Heart left ventricle (tissue), 16 donors: ENCODE measurements at regions of chr12 and their contacts with region 1.

Region 1: GRCh38 chr12:14514154-14514842 is 53.4 kb downstream of the PLBD1 start:
- DNase-seq: peak in 3 of 5 donors; percentile 23 to 42 (median 29)
- ATAC-seq: peak in 3 of 4 donors; percentile 61 to 72 (median 69)
- H3K4me3 ChIP-seq: no peak overlapping the region
- H3K27ac ChIP-seq: no peak overlapping the region
- H3K4me1 ChIP-seq: no peaks in the 10 kb centered on the region
- H3K27me3 ChIP-seq: no peaks in the 10 kb centered on the region
- CTCF ChIP-seq: peak; percentile 20 to 61 (median 52)
- POLR2A ChIP-seq: no peak

Region 2: GRCh38 chr12:14471497-14471896 is 42.8 kb before region 1 on chr12:
- intact Hi-C with region 1: no loop called
- DNase-seq: no peak
- ATAC-seq: no peak
- H3K4me3 ChIP-seq: no peak overlapping the region
- H3K27ac ChIP-seq: no peak overlapping the region
- H3K4me1 ChIP-seq: peaks cover 0 to 4% (median 0%) of the 10 kb centered on the region in 12 donors
- H3K27me3 ChIP-seq: no peaks in the 10 kb centered on the region
- CTCF ChIP-seq: no peak
- POLR2A ChIP-seq: no peak

Region 3: DNA sequence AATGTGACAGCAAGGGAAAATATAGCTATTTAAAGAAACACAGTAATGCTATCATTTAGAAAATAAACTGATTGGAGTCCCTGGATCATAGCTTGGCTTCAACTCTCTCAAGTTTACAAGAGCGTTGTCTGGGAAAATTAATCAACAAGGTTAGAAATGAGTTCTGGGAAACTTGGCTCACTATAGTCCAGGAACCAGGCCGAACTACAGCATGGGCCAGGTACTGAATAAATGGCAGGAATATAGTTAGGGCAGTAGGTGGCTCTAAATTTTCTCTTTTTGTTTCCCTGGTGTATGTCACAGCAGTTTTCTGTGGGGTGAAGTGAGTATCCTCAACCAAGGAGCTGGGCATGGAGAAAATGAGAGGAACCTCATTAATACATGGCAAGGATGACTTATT is 19.0 kb before region 1 on chr12:
- intact Hi-C with region 1: no loop called
- DNase-seq: no peak
- ATAC-seq: peak; percentile 47 to 70 (median 58)
- H3K4me3 ChIP-seq: no peak overlapping the region
- H3K27ac ChIP-seq: no peak overlapping the region
- H3K4me1 ChIP-seq: peaks cover 0 to 11% (median 0%) of the 10 kb centered on the region in 12 donors
- H3K27me3 ChIP-seq: no peaks in the 10 kb centered on the region
- CTCF ChIP-seq: no peak
- POLR2A ChIP-seq: no peak

Region 4: GRCh38 chr12:14618983-14619382 is 104.7 kb after region 1 on chr12:
- intact Hi-C with region 1: loop called (anchors 2 to 10 kb)
- DNase-seq: peak in 1 of 5 donors; percentile 11
- ATAC-seq: peak in 2 of 4 donors; percentile 44 to 75
- H3K4me3 ChIP-seq: no peak overlapping the region
- H3K27ac ChIP-seq: no peak overlapping the region
- H3K4me1 ChIP-seq: peaks cover 0 to 16% (median 5%) of the 10 kb centered on the region in 12 donors
- H3K27me3 ChIP-seq: no peaks in the 10 kb centered on the region
- CTCF ChIP-seq: peak in 10 of 12 donors; percentile 23 to 60 (median 48)
- POLR2A ChIP-seq: no peak

Region 5: GRCh38 chr12:14664510-14664909 is 150.2 kb after region 1 on chr12:
- intact Hi-C with region 1: loop called in 3 of 10 experiments (anchors 5 to 10 kb)
- DNase-seq: no peak
- ATAC-seq: peak in 2 of 4 donors; percentile 58 to 64
- H3K4me3 ChIP-seq: no peak overlapping the region
- H3K27ac ChIP-seq: no peak overlapping the region
- H3K4me1 ChIP-seq: peaks cover 0 to 3% (median 0%) of the 10 kb centered on the region in 12 donors
- H3K27me3 ChIP-seq: no peaks in the 10 kb centered on the region
- CTCF ChIP-seq: peak; percentile 50 to 81 (median 69)
- POLR2A ChIP-seq: no peak

Region 6: DNA sequence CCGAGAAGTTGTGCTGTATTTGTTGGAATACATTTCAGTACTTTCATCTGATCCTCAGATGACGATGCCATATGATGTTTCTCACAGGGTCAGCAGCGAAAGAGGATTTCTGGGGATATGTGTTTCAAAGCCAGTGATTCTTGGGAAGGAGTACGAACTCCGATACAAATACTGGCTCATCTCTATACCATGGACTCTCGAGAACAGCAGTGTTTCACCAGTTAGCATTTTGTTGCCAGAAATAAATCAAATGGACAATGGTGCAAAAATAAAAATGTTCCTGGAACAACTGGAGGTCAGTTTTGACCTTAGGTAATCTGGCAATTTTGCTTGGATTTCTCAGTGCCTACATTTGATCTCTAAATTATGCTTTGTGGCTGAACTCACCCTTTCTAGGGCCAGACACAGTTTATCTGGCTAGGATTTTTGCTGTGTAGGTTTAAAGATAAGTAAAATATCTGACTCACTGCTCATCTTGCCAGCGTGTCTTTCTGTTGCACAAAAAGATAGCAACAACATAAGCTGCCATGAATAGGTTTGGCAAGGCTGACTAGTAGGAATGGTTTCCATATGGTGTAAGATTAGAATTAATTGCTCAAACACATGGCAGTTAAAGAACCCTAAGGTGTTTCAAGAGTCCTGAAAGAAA is 382.3 kb after region 1 on chr12:
- intact Hi-C with region 1: no loop called
- DNase-seq: no peak
- ATAC-seq: peak in 3 of 4 donors; percentile 4 to 49 (median 40)
- H3K4me3 ChIP-seq: no peak overlapping the region
- H3K27ac ChIP-seq: peak overlapping the region in 11 of 12 donors; percentile 16 to 85 (median 48)
- H3K4me1 ChIP-seq: peaks cover 0 to 56% (median 20%) of the 10 kb centered on the region in 12 donors
- H3K27me3 ChIP-seq: no peaks in the 10 kb centered on the region
- CTCF ChIP-seq: no peak
- POLR2A ChIP-seq: no peak